Right ventricle myocardium superior (tissue), 1 donor: ENCODE measurements at regions of chrX and their contacts with region 1.

Region 1: GRCh38 chrX:41759817-41760216 is 35.8 kb downstream of the GPR82 start:
- DNase-seq: no peak
- ATAC-seq: no peak

Region 2: GRCh38 chrX:41275661-41276609 is 483.9 kb before region 1 on chrX:
- intact Hi-C with region 1: loop called (anchors 10 kb)
- DNase-seq: peak; percentile 77
- ATAC-seq: peak; percentile 98

Region 3: DNA sequence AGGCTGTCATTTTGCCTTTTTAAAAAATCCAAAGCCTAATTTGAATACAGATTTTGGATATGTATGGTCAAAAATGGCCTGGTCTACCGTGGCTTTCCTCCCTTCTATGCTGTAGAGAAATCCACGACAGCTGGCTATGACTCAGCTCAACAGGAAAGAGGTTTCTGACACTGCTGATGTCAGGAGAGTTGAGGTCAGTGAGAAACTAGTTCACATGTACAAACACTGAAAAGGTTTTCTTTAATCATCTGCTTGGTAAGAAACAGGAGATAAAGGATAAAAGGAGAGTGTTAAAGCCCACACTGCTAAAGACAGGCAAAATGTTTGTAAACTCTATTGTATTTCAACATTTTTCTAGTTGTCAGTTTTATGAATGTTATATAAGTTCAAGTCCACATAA is 198.8 kb before region 1 on chrX:
- intact Hi-C with region 1: loop called (anchors 10 kb)
- DNase-seq: no peak
- ATAC-seq: no peak